ENCODE measurements at regions of chr9 and their contacts with region 1.

Region 1: GRCh38 chr9:99555792-99556191 is 265.9 kb upstream of the NR4A3 start:
- DNase-seq: no peak
- ATAC-seq: no peak
- H3K4me3 ChIP-seq: no peak overlapping the region
- H3K27ac ChIP-seq: no peak overlapping the region
- H3K4me1 ChIP-seq: no peaks in the 10 kb centered on the region
- H3K27me3 ChIP-seq: no peaks in the 10 kb centered on the region
- CTCF ChIP-seq: no peak

Region 2: GRCh38 chr9:99488734-99489413 is 66.9 kb before region 1 on chr9:
- intact Hi-C with region 1: loop called in 1 of 10 experiments (anchors 10 kb)
- DNase-seq: no peak
- ATAC-seq: no peak
- H3K4me3 ChIP-seq: no peak overlapping the region
- H3K27ac ChIP-seq: no peak overlapping the region
- H3K4me1 ChIP-seq: no peaks in the 10 kb centered on the region
- H3K27me3 ChIP-seq: no peaks in the 10 kb centered on the region
- CTCF ChIP-seq: no peak

Region 3: GRCh38 chr9:99690573-99690972 is 134.8 kb after region 1 on chr9:
- intact Hi-C with region 1: no loop called
- DNase-seq: no peak
- ATAC-seq: peak in 4 of 8 donors; percentile 26 to 39 (median 31)
- H3K4me3 ChIP-seq: no peak overlapping the region
- H3K27ac ChIP-seq: no peak overlapping the region
- H3K4me1 ChIP-seq: peaks cover 0 to 15% (median 0%) of the 10 kb centered on the region in 9 donors
- H3K27me3 ChIP-seq: no peaks in the 10 kb centered on the region
- CTCF ChIP-seq: no peak

Measured in heart right ventricle (tissue), 16 donors.